Naive thymus-derived CD4-positive, alpha-beta T cell (primary cell): ENCODE measurements at regions of chr2 and their contacts with region 1.

Region 1: GRCh38 chr2:143259368-143259958 is 130.2 kb downstream of the ARHGAP15 start:
- DNase-seq: peak; percentile 25 to 76 (median 69)
- ATAC-seq: peak; percentile 63
- H3K4me3 ChIP-seq: peak overlapping the region; percentile 29
- H3K4me3 Mint-ChIP-seq: peak overlapping the region in 9 of 10 donors; percentile 77 to 90 (median 84)
- H3K27ac ChIP-seq: peak overlapping the region; percentile 49
- H3K27ac Mint-ChIP-seq: peak overlapping the region; percentile 51 to 98 (median 93)
- H3K4me1 ChIP-seq: peaks cover 68 to 75% of the 10 kb centered on the region in 2 donors
- H3K4me1 Mint-ChIP-seq: peaks cover 39 to 88% (median 84%) of the 10 kb centered on the region in 7 donors
- H3K27me3 ChIP-seq: no peaks in the 10 kb centered on the region
- H3K27me3 Mint-ChIP-seq: no peaks in the 10 kb centered on the region

Region 2: GRCh38 chr2:143078104-143078503 is 181.4 kb before region 1 on chr2:
- CTCF ChIA-PET with region 1: no interaction called
- POLR2A ChIA-PET with region 1: no interaction called
- intact Hi-C with region 1: loop called in 1 of 2 experiments (anchors 1 kb)
- DNase-seq: peak in 1 of 9 donors; percentile 9
- ATAC-seq: no peak
- H3K4me3 ChIP-seq: no peak overlapping the region
- H3K4me3 Mint-ChIP-seq: no peak overlapping the region
- H3K27ac ChIP-seq: no peak overlapping the region
- H3K27ac Mint-ChIP-seq: no peak overlapping the region
- H3K4me1 ChIP-seq: no peaks in the 10 kb centered on the region
- H3K4me1 Mint-ChIP-seq: no peaks in the 10 kb centered on the region
- H3K27me3 ChIP-seq: no peaks in the 10 kb centered on the region
- H3K27me3 Mint-ChIP-seq: no peaks in the 10 kb centered on the region

Region 3: GRCh38 chr2:143162123-143162837 is 97.2 kb before region 1 on chr2:
- CTCF ChIA-PET with region 1: interaction called, 73 read pairs
- POLR2A ChIA-PET with region 1: interaction called, 29 read pairs
- intact Hi-C with region 1: loop called (anchors 1 kb)
- DNase-seq: peak in 8 of 9 donors; percentile 9 to 76 (median 67)
- ATAC-seq: peak; percentile 97
- H3K4me3 ChIP-seq: no peak overlapping the region
- H3K4me3 Mint-ChIP-seq: peak overlapping the region in 7 of 10 donors; percentile 0 to 53 (median 6)
- H3K27ac ChIP-seq: peak overlapping the region; percentile 18
- H3K27ac Mint-ChIP-seq: peak overlapping the region in 8 of 9 donors; percentile 50 to 91 (median 82)
- H3K4me1 ChIP-seq: peaks cover 13 to 58% of the 10 kb centered on the region in 2 donors
- H3K4me1 Mint-ChIP-seq: peaks cover 64 to 98% (median 93%) of the 10 kb centered on the region in 7 donors
- H3K27me3 ChIP-seq: no peaks in the 10 kb centered on the region
- H3K27me3 Mint-ChIP-seq: no peaks in the 10 kb centered on the region

Region 4: GRCh38 chr2:143230506-143231253 is 28.8 kb before region 1 on chr2:
- CTCF ChIA-PET with region 1: interaction called, 5 read pairs
- POLR2A ChIA-PET with region 1: interaction called, 3 read pairs
- intact Hi-C with region 1: loop called in 1 of 2 experiments (anchors 1 kb)
- DNase-seq: no peak
- ATAC-seq: no peak
- H3K4me3 ChIP-seq: no peak overlapping the region
- H3K4me3 Mint-ChIP-seq: peak overlapping the region in 1 of 10 donors; percentile 7
- H3K27ac ChIP-seq: no peak overlapping the region
- H3K27ac Mint-ChIP-seq: peak overlapping the region in 6 of 9 donors; percentile 31 to 69 (median 54)
- H3K4me1 ChIP-seq: peaks cover 8 to 12% of the 10 kb centered on the region in 2 donors
- H3K4me1 Mint-ChIP-seq: peaks cover 15 to 52% (median 32%) of the 10 kb centered on the region in 7 donors
- H3K27me3 ChIP-seq: no peaks in the 10 kb centered on the region
- H3K27me3 Mint-ChIP-seq: no peaks in the 10 kb centered on the region

Region 5: DNA sequence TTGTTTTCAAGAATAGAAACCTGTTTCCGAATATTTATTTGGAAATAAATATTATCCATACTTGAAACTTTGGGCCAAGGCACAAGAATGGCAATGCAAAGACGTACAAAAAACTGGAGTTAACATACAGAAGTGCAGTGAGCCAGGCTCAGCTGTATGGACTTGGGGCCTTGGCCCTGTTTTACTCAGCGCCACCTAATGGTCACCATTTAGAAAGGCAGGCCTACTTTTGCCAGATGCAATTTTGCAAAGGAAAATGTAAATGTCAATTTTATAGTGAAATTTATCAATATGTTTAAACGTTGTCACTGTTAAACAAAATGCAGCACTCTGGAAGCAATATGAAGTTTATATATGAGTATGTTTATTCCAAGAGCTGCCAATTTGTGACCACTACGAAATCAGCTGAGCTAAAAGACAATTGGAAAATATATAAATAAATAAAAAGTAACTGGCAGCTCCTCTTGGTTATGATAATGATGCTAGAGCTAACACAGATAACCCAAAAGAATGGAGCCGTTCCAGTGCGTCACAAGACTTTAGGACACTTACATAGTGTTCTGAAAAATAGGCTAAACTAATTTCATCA is 24.7 kb after region 1 on chr2:
- CTCF ChIA-PET with region 1: interaction called, 5 read pairs
- POLR2A ChIA-PET with region 1: interaction called, 7 read pairs
- intact Hi-C with region 1: loop called in 1 of 2 experiments (anchors 1 kb)
- DNase-seq: peak in 6 of 9 donors; percentile 6 to 37 (median 26)
- ATAC-seq: peak; percentile 84
- H3K4me3 ChIP-seq: no peak overlapping the region
- H3K4me3 Mint-ChIP-seq: no peak overlapping the region
- H3K27ac ChIP-seq: no peak overlapping the region
- H3K27ac Mint-ChIP-seq: peak overlapping the region in 4 of 9 donors; percentile 13 to 67 (median 42)
- H3K4me1 ChIP-seq: no peaks in the 10 kb centered on the region
- H3K4me1 Mint-ChIP-seq: peaks cover 16 to 70% (median 49%) of the 10 kb centered on the region in 7 donors
- H3K27me3 ChIP-seq: no peaks in the 10 kb centered on the region
- H3K27me3 Mint-ChIP-seq: no peaks in the 10 kb centered on the region

Region 6: GRCh38 chr2:143300536-143300935 is 41.1 kb after region 1 on chr2:
- CTCF ChIA-PET with region 1: no interaction called
- POLR2A ChIA-PET with region 1: no interaction called
- intact Hi-C with region 1: no loop called
- DNase-seq: no peak
- ATAC-seq: no peak
- H3K4me3 ChIP-seq: no peak overlapping the region
- H3K4me3 Mint-ChIP-seq: no peak overlapping the region
- H3K27ac ChIP-seq: no peak overlapping the region
- H3K27ac Mint-ChIP-seq: peak overlapping the region in 2 of 9 donors; percentile 28 to 65
- H3K4me1 ChIP-seq: no peaks in the 10 kb centered on the region
- H3K4me1 Mint-ChIP-seq: peaks cover 11 to 40% (median 27%) of the 10 kb centered on the region in 7 donors
- H3K27me3 ChIP-seq: no peaks in the 10 kb centered on the region
- H3K27me3 Mint-ChIP-seq: no peaks in the 10 kb centered on the region